ENCODE measurements at regions of chr15 and their contacts with region 1.

Region 1: DNA sequence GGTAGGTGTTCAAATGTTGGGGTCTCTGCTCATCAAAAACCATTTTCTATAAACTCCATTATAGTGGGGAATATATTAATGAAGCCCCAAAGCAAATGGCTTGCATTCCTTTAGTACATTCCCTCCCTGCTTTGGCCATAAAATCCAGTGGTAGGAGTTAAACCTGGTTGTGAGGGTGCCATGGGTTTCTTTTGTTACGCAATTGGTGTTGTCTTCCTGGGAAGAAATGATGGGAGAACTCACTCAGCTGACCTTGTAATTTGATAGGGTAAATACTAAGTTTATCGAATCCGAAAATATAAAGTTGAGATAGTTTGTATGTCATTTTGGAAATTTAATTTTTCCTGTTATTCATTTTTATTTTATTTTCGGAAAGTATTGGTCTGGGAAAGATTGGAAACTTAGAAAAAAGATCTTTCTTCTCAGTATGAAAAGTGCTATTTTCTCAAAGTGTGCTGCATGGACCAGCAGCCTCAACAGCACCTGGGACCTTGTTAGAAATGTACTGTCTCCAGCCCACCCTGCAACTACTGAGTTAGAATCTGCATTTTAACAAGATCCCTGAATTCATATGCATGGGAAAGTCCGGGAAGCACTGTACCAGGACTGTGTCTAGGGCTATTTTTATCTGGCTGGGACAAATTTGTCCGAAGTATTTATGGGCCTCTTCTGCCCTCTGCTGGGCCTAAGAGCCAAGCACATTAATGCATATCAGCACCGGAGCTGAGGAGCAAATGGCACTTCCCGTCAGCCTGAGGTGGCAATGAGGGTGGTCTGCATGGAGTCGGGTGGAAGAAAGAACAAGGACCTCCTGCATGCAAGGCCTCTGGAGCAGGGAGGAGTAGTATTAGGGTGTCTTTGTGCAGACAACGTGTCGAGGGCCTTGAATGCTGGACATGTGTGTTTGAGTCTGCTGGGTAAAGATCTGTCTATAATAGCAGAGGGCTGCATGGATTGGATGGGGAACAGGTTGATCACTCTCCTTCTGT is 54.7 kb downstream of the FAM81A start:
- DNase-seq: peak; percentile 18 to 54
- ATAC-seq: peak; percentile 96 to 100
- H3K4me3 ChIP-seq: peak overlapping the region in 3 of 4 donors; percentile 12 to 32 (median 22)
- H3K27ac ChIP-seq: no peak overlapping the region
- H3K4me1 ChIP-seq: peaks cover 3 to 5% of the 10 kb centered on the region in 2 donors
- H3K27me3 ChIP-seq: no peaks in the 10 kb centered on the region
- CTCF ChIP-seq: peak; percentile 76 to 87 (median 81)
- POLR2A ChIP-seq: no peak

Region 2: GRCh38 chr15:58212909-58213526 is 1279.7 kb before region 1 on chr15:
- in situ Hi-C with region 1: loop called in 1 of 4 experiments (anchors 25 kb)
- intact Hi-C with region 1: no loop called
- DNase-seq: no peak
- ATAC-seq: peak in 1 of 2 donors; percentile 63
- H3K4me3 ChIP-seq: no peak overlapping the region
- H3K27ac ChIP-seq: no peak overlapping the region
- H3K4me1 ChIP-seq: no peaks in the 10 kb centered on the region
- H3K27me3 ChIP-seq: no peaks in the 10 kb centered on the region
- CTCF ChIP-seq: peak in 3 of 5 experiments; percentile 12 to 46 (median 23)
- POLR2A ChIP-seq: no peak

Region 3: GRCh38 chr15:58830556-58830955 is 662.1 kb before region 1 on chr15:
- in situ Hi-C with region 1: no loop called
- intact Hi-C with region 1: no loop called
- DNase-seq: no peak
- ATAC-seq: no peak
- H3K4me3 ChIP-seq: no peak overlapping the region
- H3K27ac ChIP-seq: no peak overlapping the region
- H3K4me1 ChIP-seq: no peaks in the 10 kb centered on the region
- H3K27me3 ChIP-seq: no peaks in the 10 kb centered on the region
- CTCF ChIP-seq: no peak
- POLR2A ChIP-seq: no peak

Region 4: GRCh38 chr15:58980351-58980939 is 512.2 kb before region 1 on chr15:
- in situ Hi-C with region 1: loop called (anchors 5 to 10 kb)
- intact Hi-C with region 1: loop called (anchors 2 kb)
- DNase-seq: no peak
- ATAC-seq: no peak
- H3K4me3 ChIP-seq: no peak overlapping the region
- H3K27ac ChIP-seq: no peak overlapping the region
- H3K4me1 ChIP-seq: no peaks in the 10 kb centered on the region
- H3K27me3 ChIP-seq: no peaks in the 10 kb centered on the region
- CTCF ChIP-seq: peak; percentile 31 to 64 (median 49)
- POLR2A ChIP-seq: no peak

Region 5: GRCh38 chr15:59169251-59169708 is 323.4 kb before region 1 on chr15:
- in situ Hi-C with region 1: loop called in 3 of 4 experiments (anchors 5 to 25 kb)
- intact Hi-C with region 1: no loop called
- DNase-seq: no peak
- ATAC-seq: peak; percentile 72 to 78
- H3K4me3 ChIP-seq: no peak overlapping the region
- H3K27ac ChIP-seq: peak overlapping the region; percentile 0 to 47 (median 40)
- H3K4me1 ChIP-seq: no peaks in the 10 kb centered on the region
- H3K27me3 ChIP-seq: no peaks in the 10 kb centered on the region
- CTCF ChIP-seq: no peak
- POLR2A ChIP-seq: no peak

Region 6: GRCh38 chr15:59247364-59247763 is 245.3 kb before region 1 on chr15:
- in situ Hi-C with region 1: loop called in 1 of 4 experiments (anchors 10 kb)
- intact Hi-C with region 1: loop called (anchors 5 kb)
- DNase-seq: peak in 1 of 2 donors; percentile 16
- ATAC-seq: peak in 1 of 2 donors; percentile 33
- H3K4me3 ChIP-seq: no peak overlapping the region
- H3K27ac ChIP-seq: no peak overlapping the region
- H3K4me1 ChIP-seq: no peaks in the 10 kb centered on the region
- H3K27me3 ChIP-seq: no peaks in the 10 kb centered on the region
- CTCF ChIP-seq: peak in 4 of 5 experiments; percentile 17 to 52 (median 47)
- POLR2A ChIP-seq: no peak

Region 7: DNA sequence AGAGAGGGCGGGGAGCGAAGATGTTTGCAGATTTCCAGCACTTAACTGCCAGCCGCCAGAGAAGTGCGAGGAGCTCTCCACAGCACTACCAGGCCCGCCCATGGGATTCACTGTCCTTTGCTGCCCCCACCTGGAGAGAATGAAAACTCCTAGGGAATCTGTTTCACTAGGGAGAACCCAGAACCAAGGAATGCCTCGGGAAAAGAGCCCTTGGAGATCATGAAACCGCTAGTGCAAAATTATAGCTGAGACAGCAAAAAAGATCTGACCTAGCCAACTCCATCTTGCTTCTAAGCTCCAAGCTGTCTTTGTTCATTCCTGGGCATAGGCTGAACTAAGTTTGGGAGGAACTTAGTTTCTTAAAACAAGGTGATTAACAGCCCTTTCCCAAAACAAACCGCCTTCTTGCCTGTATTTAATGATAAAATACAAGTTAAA is 36.3 kb after region 1 on chr15:
- in situ Hi-C with region 1: no loop called
- intact Hi-C with region 1: no loop called
- DNase-seq: peak; percentile 48 to 62
- ATAC-seq: peak; percentile 93 to 98
- H3K4me3 ChIP-seq: no peak overlapping the region
- H3K27ac ChIP-seq: no peak overlapping the region
- H3K4me1 ChIP-seq: no peaks in the 10 kb centered on the region
- H3K27me3 ChIP-seq: peaks cover 0 to 7% (median 4%) of the 10 kb centered on the region in 3 donors
- CTCF ChIP-seq: peak; percentile 60 to 83 (median 70)
- POLR2A ChIP-seq: no peak